Stomach (tissue), 19 donors: ENCODE measurements at regions of chr13 and their contacts with region 1.

Region 1: DNA sequence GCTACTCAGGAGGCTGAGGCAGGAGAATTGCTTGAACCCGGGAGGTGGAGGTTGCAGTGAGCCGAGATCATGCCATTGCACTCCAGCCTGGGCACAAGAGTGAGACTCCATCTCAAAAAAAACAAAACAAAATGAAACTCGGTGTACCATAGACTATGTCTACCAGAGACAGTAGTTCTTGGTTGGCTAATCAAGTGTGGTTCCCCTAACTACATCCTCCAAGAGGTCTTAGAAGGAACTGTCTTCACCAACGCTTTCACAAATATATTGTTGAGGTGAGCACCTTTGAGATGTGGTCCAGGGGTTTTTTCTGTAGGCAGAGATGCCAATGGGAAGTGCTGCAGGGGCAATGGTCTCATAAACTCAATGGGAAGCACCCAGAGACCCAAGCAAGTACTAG is 48.0 kb downstream of the RFC3 start:
- DNase-seq: no peak
- H3K4me3 ChIP-seq: no peak overlapping the region
- H3K27ac ChIP-seq: no peak overlapping the region
- H3K4me1 ChIP-seq: no peaks in the 10 kb centered on the region
- H3K27me3 ChIP-seq: no peaks in the 10 kb centered on the region
- CTCF ChIP-seq: no peak
- EP300 ChIP-seq: no peak
- POLR2A ChIP-seq: no peak

Region 2: GRCh38 chr13:35252536-35253205 is 1386.7 kb after region 1 on chr13:
- intact Hi-C with region 1: loop called (anchors 5 kb)
- DNase-seq: no peak
- H3K4me3 ChIP-seq: no peak overlapping the region
- H3K27ac ChIP-seq: no peak overlapping the region
- H3K4me1 ChIP-seq: no peaks in the 10 kb centered on the region
- H3K27me3 ChIP-seq: no peaks in the 10 kb centered on the region
- CTCF ChIP-seq: no peak
- EP300 ChIP-seq: no peak
- POLR2A ChIP-seq: no peak